Natural killer cell (primary cell): ENCODE measurements at regions of chr19 and their contacts with region 1.

Region 1: GRCh38 chr19:19643158-19644053 is at the start of gene GMIP:
- DNase-seq: peak; percentile 88 to 93
- ATAC-seq: peak; percentile 86 to 92 (median 86)
- H3K4me3 ChIP-seq: peak within 1 kb of the TSS; percentile 99
- H3K4me3 Mint-ChIP-seq: peak within 1 kb of the TSS; percentile 98
- H3K27ac ChIP-seq: peak within 1 kb of the TSS; percentile 95
- H3K27ac Mint-ChIP-seq: peak within 1 kb of the TSS; percentile 92 to 95
- H3K4me1 ChIP-seq: peaks cover 27% of the 10 kb centered on the region
- H3K4me1 Mint-ChIP-seq: peaks cover 15 to 22% of the 10 kb centered on the region in 2 donors
- H3K27me3 ChIP-seq: no peaks in the 10 kb centered on the region
- H3K27me3 Mint-ChIP-seq: no peaks in the 10 kb centered on the region
- CTCF ChIP-seq: peak; percentile 90
- total RNA-seq, gene GMIP: 134 to 188 (median 150) TPM

Region 2: DNA sequence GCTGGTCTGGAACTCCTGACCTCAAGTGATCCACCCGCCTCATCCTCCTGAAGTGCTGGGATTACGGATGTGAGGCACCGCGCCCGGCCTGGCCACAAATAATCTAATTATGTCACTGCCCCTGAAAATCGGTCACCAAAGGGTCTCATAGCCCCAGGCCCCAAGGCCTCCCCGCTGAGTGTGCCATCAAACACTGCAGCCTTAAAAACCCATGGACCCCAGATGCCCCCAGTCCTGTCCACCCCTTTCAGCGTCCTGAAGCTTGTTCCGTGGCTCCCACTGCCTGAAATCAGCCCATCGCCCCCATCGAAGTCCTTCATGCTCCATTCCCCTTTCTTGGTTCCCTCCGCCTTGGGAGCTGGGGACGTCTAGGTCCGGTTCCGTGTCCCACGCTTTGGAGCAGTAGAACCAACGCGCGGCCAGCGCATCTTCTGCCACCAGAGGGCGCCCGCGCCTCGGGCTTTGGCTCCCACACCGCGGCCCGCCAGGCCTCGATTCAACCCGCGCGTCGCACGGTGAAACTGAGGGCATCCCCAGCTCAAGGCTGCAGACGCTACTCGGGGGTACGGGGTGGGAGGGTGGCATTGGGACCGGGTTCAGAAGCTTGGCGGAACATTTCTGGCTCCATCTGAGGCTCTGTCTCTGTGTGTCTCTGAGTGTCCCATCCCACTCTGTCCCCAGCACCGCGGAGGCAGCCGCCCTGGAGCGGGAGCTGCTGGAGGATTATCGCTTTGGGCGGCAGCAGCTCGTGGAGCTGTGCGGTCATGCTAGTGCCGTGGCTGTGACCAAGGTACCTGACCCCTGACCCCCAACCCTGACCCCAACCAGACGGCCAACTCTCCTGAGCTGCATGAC is 111.2 kb before region 1 on chr19:
- intact Hi-C with region 1: loop called (anchors 1 kb)
- DNase-seq: peak; percentile 88 to 92
- ATAC-seq: peak; percentile 83 to 93 (median 86)
- H3K4me3 ChIP-seq: no peak overlapping the region
- H3K4me3 Mint-ChIP-seq: peak overlapping the region; percentile 25
- H3K27ac ChIP-seq: no peak overlapping the region
- H3K27ac Mint-ChIP-seq: peak overlapping the region; percentile 58 to 83
- H3K4me1 ChIP-seq: peaks cover 11% of the 10 kb centered on the region
- H3K4me1 Mint-ChIP-seq: peaks cover 6 to 20% of the 10 kb centered on the region in 2 donors
- H3K27me3 ChIP-seq: no peaks in the 10 kb centered on the region
- H3K27me3 Mint-ChIP-seq: peaks cover 0 to 2% of the 10 kb centered on the region in 2 donors
- CTCF ChIP-seq: peak; percentile 95

Region 3: GRCh38 chr19:19580418-19580817 is 63.0 kb before region 1 on chr19:
- intact Hi-C with region 1: no loop called
- DNase-seq: no peak
- ATAC-seq: no peak
- H3K4me3 ChIP-seq: no peak overlapping the region
- H3K4me3 Mint-ChIP-seq: no peak overlapping the region
- H3K27ac ChIP-seq: no peak overlapping the region
- H3K27ac Mint-ChIP-seq: no peak overlapping the region
- H3K4me1 ChIP-seq: no peaks in the 10 kb centered on the region
- H3K4me1 Mint-ChIP-seq: peaks cover 5 to 13% of the 10 kb centered on the region in 2 donors
- H3K27me3 ChIP-seq: no peaks in the 10 kb centered on the region
- H3K27me3 Mint-ChIP-seq: no peaks in the 10 kb centered on the region
- CTCF ChIP-seq: no peak

Region 4: GRCh38 chr19:19591133-19591825 is 52.1 kb before region 1 on chr19:
- intact Hi-C with region 1: loop called (anchors 2 kb)
- DNase-seq: peak; percentile 40 to 87
- ATAC-seq: peak; percentile 84 to 90 (median 89)
- H3K4me3 ChIP-seq: no peak overlapping the region
- H3K4me3 Mint-ChIP-seq: no peak overlapping the region
- H3K27ac ChIP-seq: peak overlapping the region; percentile 80
- H3K27ac Mint-ChIP-seq: peak overlapping the region; percentile 56 to 79
- H3K4me1 ChIP-seq: peaks cover 32% of the 10 kb centered on the region
- H3K4me1 Mint-ChIP-seq: peaks cover 0 to 16% of the 10 kb centered on the region in 2 donors
- H3K27me3 ChIP-seq: no peaks in the 10 kb centered on the region
- H3K27me3 Mint-ChIP-seq: no peaks in the 10 kb centered on the region
- CTCF ChIP-seq: no peak

Region 5: GRCh38 chr19:19618219-19619051 is 25.0 kb before region 1 on chr19 and contains the start of gene PBX4:
- intact Hi-C with region 1: loop called (anchors 1 kb)
- DNase-seq: peak; percentile 98 to 100
- ATAC-seq: peak; percentile 91 to 99 (median 94)
- H3K4me3 ChIP-seq: peak within 1 kb of the TSS; percentile 50
- H3K4me3 Mint-ChIP-seq: peak within 1 kb of the TSS; percentile 92
- H3K27ac ChIP-seq: peak within 1 kb of the TSS; percentile 67
- H3K27ac Mint-ChIP-seq: peak within 1 kb of the TSS; percentile 90 to 94
- H3K4me1 ChIP-seq: peaks cover 39% of the 10 kb centered on the region
- H3K4me1 Mint-ChIP-seq: peaks cover 39 to 45% of the 10 kb centered on the region in 2 donors
- H3K27me3 ChIP-seq: no peaks in the 10 kb centered on the region
- H3K27me3 Mint-ChIP-seq: no peaks in the 10 kb centered on the region
- CTCF ChIP-seq: no peak
- total RNA-seq, gene PBX4: 10.7 to 15.9 (median 11.1) TPM

Region 6: GRCh38 chr19:19627621-19628500 is 15.5 kb before region 1 on chr19 and contains the start of gene LPAR2:
- intact Hi-C with region 1: loop called (anchors 2 kb)
- DNase-seq: peak; percentile 66 to 91
- ATAC-seq: peak; percentile 73 to 87 (median 81)
- H3K4me3 ChIP-seq: peak within 1 kb of the TSS; percentile 48
- H3K4me3 Mint-ChIP-seq: peak within 1 kb of the TSS; percentile 86
- H3K27ac ChIP-seq: peak within 1 kb of the TSS; percentile 67
- H3K27ac Mint-ChIP-seq: peak within 1 kb of the TSS; percentile 80 to 88
- H3K4me1 ChIP-seq: peaks cover 23% of the 10 kb centered on the region
- H3K4me1 Mint-ChIP-seq: peaks cover 19 to 28% of the 10 kb centered on the region in 2 donors
- H3K27me3 ChIP-seq: no peaks in the 10 kb centered on the region
- H3K27me3 Mint-ChIP-seq: no peaks in the 10 kb centered on the region
- CTCF ChIP-seq: no peak
- total RNA-seq, gene LPAR2: 52.1 to 81.5 (median 56.4) TPM